ENCODE measurements at regions of chrX and their contacts with region 1.

Region 1: DNA sequence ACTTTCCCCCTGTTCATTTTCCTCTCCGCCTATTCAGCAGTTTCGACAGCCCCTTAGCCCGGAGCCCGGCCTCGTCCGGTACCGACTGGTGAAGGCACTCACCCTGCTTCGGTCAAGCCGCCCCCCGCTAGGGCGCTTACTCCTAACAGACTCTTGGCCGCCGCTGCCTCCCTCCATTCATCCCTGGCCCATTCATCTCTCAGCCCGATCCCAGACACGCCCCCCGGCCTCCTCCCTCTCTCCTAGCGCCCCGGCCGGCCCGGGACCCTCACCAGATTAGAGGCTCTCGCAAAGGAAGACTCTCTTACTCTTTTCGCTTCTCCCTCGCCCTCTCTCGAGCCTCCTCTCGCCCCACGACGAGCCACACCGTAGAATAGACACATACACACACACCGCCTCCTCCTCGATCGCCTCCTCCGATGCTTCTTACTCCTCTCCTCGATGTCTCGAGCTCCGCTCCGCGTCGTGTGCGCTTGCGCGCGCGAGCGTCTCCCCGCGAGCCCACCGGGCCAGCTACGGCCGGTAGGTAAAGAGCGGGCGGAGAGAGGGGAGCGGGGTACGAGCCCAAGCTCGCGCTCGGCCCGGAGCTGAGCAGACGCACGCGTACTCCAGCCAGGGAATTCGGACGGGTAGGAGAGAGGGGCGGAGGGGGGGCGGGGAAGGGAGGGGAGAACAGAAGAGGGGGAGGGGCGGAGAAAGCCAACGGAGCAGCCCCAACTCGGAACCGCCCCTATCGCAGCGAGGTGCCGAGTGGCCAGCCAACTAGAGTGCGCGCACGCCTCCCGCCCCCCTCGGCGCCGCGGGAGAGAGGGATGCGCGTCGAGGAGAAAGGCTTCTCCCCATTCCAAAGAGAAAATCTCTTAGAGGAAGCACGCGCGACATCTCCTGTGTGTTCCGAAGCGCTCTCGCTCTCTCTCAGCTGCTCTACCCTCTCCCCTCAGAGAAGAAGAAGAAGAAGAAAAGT is at the start of gene WNK3:
- DNase-seq: peak; percentile 48 to 83 (median 72)
- H3K4me3 ChIP-seq: peak within 1 kb of the TSS; percentile 45 to 74 (median 61)
- H3K27ac ChIP-seq: peak within 1 kb of the TSS; percentile 17 to 93 (median 84)
- H3K27me3 ChIP-seq: peaks cover 0 to 31% (median 10%) of the 10 kb centered on the region in 45 donors
- CTCF ChIP-seq: no peak
- total RNA-seq, gene WNK3: 8.0 to 23.1 (median 15.0) TPM

Region 2: DNA sequence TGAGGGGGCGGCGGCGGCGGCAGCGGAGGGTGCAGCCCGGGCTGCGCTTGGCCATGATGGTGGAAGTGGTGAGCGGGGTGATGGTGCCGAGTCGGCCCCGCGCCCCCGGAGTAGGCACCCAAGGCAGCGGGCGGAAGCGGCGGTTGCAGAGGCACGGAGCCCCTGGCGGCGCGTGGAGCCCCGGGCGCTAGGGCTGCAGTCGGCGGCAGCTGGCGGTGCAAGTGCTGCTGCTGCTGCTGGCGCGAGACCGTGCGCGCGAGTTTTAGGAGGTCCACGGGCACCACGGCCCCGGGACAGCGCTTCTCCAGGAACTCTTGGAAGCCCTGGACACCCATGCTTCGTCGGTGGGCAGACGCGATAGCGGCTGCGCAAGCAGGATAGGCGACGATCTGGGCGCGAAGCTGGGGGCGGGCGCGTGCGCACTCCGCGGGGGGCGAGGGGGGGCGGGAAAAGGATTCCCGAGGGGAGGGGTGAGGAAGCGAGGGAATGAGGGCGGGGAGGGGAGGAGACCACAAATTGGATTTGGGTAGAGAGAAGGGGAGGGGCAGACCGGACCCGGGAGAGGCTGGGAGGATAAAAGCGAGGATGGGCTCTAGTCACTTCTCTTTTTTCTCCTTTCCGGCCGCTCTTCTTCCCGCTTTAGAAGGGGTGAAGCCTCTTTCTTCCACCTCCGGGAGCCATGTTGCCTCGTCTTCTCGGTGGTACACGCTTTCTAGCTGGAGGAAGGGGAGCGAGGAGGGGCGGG is 174.7 kb before region 1 on chrX and contains the start of gene FAM120C:
- intact Hi-C with region 1: loop called in 1 of 2 experiments (anchors 5 kb)
- DNase-seq: peak; percentile 32 to 67 (median 50)
- H3K4me3 ChIP-seq: peak within 1 kb of the TSS; percentile 34 to 86 (median 71)
- H3K27ac ChIP-seq: peak within 1 kb of the TSS in 57 of 59 donors; percentile 49 to 94 (median 84)
- H3K27me3 ChIP-seq: peaks cover 0 to 59% (median 13%) of the 10 kb centered on the region in 45 donors
- CTCF ChIP-seq: no peak
- total RNA-seq, gene FAM120C: 18.9 to 33.3 (median 25.4) TPM

Region 3: DNA sequence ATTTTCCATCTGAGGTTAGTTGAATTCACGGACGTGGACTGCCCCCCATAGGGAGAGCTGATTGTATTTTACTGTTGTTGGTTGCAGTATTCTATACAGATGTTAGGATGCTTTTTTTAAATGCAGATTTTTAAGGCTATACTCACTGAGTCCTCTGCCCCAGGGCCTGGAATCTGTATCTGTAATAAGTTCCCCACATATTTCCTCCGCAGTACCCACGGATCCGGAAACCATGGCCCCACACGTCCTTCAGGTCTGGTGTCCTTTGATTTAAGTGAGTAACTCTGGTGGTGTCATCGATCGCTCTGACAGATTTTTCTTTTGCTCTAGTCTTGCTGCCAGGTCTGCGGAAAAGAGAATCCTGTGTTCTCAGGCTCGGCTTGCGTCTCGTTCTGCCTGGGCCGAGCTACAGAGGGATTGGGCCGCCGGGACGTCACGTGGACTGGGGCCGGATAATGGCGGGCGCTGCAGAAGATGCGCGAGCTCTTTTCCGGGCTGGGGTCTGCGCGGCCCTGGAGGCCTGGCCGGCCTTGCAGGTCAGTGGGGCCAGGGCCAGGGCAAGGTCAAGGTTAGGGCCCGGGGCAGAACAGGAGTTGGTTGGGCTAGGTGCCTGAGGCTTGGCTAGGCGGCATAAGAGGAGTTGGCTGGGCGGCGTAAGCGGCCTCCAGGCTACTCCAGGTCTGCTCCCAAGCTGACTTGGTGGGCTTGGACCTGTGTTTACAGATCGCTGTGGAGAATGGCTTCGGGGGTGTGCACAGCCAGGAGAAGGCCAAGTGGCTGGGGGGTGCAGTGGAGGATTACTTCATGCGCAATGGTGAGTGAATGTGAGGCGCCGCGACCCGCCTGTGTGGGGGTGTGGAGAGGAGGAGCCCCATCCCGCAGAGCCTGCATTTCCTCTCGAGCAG is 82.5 kb after region 1 on chrX and contains the start of gene TSR2:
- intact Hi-C with region 1: loop called in 1 of 2 experiments (anchors 5 kb)
- DNase-seq: peak; percentile 68 to 88 (median 84)
- H3K4me3 ChIP-seq: peak within 1 kb of the TSS; percentile 45 to 93 (median 78)
- H3K27ac ChIP-seq: peak within 1 kb of the TSS in 39 of 59 donors; percentile 14 to 82 (median 57)
- H3K27me3 ChIP-seq: peaks cover 0 to 46% (median 5%) of the 10 kb centered on the region in 45 donors
- CTCF ChIP-seq: peak in 15 of 56 donors; percentile 3 to 35 (median 16)
- total RNA-seq, gene TSR2: 58.9 to 122 (median 92.9) TPM

Region 4: GRCh38 chrX:54529552-54530357 is 172.1 kb after region 1 on chrX and contains the start of gene GNL3L:
- intact Hi-C with region 1: loop called in 1 of 2 experiments (anchors 5 kb)
- DNase-seq: peak; percentile 66 to 89 (median 82)
- H3K4me3 ChIP-seq: peak within 1 kb of the TSS; percentile 46 to 86 (median 69)
- H3K27ac ChIP-seq: peak within 1 kb of the TSS; percentile 52 to 96 (median 91)
- H3K27me3 ChIP-seq: peaks cover 0 to 26% (median under 1%) of the 10 kb centered on the region in 45 donors
- CTCF ChIP-seq: peak in 5 of 56 donors; percentile 7 to 17 (median 11)
- total RNA-seq, gene GNL3L: 18.8 to 35.6 (median 27.4) TPM

Region 5: GRCh38 chrX:54639346-54640102 is 281.8 kb after region 1 on chrX:
- intact Hi-C with region 1: loop called in 1 of 2 experiments (anchors 10 kb)
- DNase-seq: peak; percentile 74 to 92 (median 89)
- H3K4me3 ChIP-seq: peak overlapping the region; percentile 21 to 72 (median 54)
- H3K27ac ChIP-seq: peak overlapping the region; percentile 58 to 97 (median 88)
- H3K27me3 ChIP-seq: peaks cover 0 to 36% (median 0%) of the 10 kb centered on the region in 45 donors
- CTCF ChIP-seq: peak in 55 of 56 donors; percentile 38 to 78 (median 64)

Region 6: DNA sequence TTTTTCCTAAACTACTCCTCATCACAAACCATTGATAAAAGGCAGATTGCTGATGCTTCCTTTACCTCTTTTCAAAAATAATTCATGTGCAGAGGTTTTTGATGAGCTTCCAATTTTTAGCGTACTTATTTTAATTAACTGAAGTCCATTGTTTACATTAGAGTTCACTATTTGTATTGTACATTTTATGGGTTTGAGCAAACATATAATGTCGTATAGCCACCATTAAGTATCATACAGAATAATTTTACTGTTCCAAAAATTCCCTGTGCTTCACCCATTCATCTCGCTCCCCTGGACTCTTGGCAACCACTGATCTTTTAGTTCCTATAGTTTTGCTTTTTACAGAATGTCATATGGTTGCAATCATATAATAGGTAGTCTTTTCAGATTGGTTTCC is 326.0 kb after region 1 on chrX:
- intact Hi-C with region 1: no loop called
- DNase-seq: no peak
- H3K4me3 ChIP-seq: no peak overlapping the region
- H3K27ac ChIP-seq: no peak overlapping the region
- H3K27me3 ChIP-seq: peaks cover 0 to 19% (median 0%) of the 10 kb centered on the region in 45 donors
- CTCF ChIP-seq: no peak

Region 7: GRCh38 chrX:54776987-54777672 is 419.4 kb after region 1 on chrX:
- intact Hi-C with region 1: no loop called
- DNase-seq: no peak
- H3K4me3 ChIP-seq: no peak overlapping the region
- H3K27ac ChIP-seq: no peak overlapping the region
- H3K27me3 ChIP-seq: peaks cover 0 to 83% (median 23%) of the 10 kb centered on the region in 45 donors
- CTCF ChIP-seq: no peak